Heart right ventricle (tissue), 16 donors: ENCODE measurements at regions of chr2 and their contacts with region 1.

Region 1: DNA sequence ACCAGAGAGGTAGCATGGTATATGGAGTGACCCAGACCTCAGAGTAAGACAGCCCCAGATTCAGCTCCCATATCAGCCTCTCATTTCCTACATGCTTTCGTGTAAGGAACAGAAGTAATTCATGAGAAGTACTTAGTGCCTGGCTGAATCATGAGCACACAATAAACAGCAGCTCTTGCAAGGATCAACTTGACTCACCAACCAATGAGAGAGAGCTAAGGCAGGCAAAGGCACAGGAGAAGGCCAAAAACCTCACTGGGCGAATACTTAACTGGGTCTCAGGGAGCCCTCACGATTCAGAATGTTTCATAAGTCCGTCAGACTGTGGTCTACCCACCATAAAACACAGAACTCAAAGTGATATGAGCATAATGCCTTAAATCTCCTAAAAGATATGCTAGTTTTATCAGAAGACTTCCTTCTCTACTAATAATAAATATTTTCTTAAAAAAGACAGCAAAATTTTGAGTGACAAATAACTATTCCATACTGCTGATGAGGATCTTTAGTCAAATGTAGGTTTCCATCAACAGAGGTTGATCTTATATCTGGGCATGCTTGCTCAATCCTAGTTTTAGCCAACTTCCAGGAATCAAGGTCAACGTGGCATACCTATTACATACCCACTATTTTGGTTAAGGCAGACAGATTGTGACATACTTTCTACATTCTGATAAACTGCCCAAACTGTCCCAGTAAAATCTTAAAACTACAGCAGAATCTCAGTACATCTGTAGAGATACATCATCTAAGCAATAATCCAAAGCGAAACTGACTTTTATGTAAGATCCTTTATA is 34.9 kb downstream of the IMMT start:
- DNase-seq: no peak
- ATAC-seq: no peak
- H3K4me3 ChIP-seq: no peak overlapping the region
- H3K27ac ChIP-seq: no peak overlapping the region
- H3K4me1 ChIP-seq: no peaks in the 10 kb centered on the region
- H3K27me3 ChIP-seq: no peaks in the 10 kb centered on the region
- CTCF ChIP-seq: no peak

Region 2: GRCh38 chr2:85396531-85397470 is 763.6 kb before region 1 on chr2:
- intact Hi-C with region 1: loop called in 1 of 10 experiments (anchors 5 kb)
- DNase-seq: no peak
- ATAC-seq: peak in 3 of 8 donors; percentile 18 to 25 (median 23)
- H3K4me3 ChIP-seq: no peak overlapping the region
- H3K27ac ChIP-seq: peak overlapping the region in 1 of 10 donors; percentile 5
- H3K4me1 ChIP-seq: peaks cover 0 to 6% (median 0%) of the 10 kb centered on the region in 9 donors
- H3K27me3 ChIP-seq: no peaks in the 10 kb centered on the region
- CTCF ChIP-seq: no peak

Region 3: DNA sequence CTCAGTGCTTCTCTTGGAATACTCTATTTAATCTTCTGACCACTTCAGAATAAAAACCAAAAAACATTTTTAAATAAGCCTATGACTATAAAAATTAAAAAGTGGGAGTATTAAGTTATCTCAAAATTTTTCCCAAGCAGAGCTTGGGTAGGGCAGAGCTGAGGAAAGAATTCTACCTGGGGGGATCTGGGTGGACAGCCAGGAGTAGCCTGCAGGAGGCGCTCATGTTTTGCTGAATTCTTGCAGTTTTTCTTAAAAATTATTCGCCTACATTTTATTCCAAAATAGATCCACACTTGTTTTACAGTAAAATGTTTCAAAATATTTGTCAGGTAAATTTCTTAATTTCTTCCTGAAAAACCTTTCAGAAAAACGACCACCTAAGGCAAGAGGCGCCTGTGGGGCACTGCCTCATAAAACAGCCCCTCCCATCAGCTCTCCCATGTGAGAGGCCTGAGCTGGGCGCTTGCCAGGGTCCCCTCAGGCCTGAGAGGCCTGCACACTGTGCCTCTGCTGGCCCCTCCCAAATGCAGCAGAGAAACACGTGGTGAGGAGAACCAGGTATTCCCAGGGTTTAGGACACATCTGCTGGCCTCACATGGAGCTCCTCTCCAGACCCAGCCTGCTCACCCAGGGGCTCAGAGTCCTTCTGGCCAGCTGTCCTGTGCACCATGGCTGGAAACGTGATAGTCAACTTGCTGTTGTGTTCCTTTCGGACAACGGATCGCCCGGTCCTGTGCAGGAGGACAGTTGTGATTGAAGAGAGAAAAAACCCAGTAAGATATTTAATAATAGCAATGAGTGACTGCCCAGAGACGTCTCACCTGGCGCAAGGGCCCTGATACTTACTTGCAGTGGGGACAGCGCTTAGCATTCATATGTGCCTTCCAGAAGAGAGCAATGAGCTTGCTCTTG is 72.2 kb before region 1 on chr2:
- intact Hi-C with region 1: no loop called
- DNase-seq: no peak
- ATAC-seq: no peak
- H3K4me3 ChIP-seq: no peak overlapping the region
- H3K27ac ChIP-seq: no peak overlapping the region
- H3K4me1 ChIP-seq: no peaks in the 10 kb centered on the region
- H3K27me3 ChIP-seq: no peaks in the 10 kb centered on the region
- CTCF ChIP-seq: peak in 5 of 9 donors; percentile 14 to 35 (median 23)

Region 4: DNA sequence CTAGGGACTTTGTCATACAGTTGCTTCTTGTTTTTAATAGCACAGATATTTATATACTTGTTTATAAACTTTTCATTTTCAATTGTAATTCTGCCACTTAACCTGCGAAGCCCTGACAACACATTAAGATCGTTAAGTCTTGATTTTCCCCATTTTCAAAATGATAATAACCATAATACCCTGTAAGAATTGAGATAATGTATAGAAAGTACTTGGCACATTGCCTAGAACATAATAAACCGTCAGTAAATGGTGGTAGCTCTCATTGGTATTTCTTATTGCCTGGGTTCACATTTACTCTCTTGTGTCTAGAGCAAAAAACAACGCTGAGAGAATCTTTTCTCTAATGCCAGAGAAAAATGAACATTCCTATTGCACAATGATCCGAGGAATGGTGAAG is 35.7 kb before region 1 on chr2:
- intact Hi-C with region 1: loop called in 1 of 10 experiments (anchors 5 kb)
- DNase-seq: no peak
- ATAC-seq: no peak
- H3K4me3 ChIP-seq: no peak overlapping the region
- H3K27ac ChIP-seq: no peak overlapping the region
- H3K4me1 ChIP-seq: no peaks in the 10 kb centered on the region
- H3K27me3 ChIP-seq: no peaks in the 10 kb centered on the region
- CTCF ChIP-seq: no peak

Region 5: DNA sequence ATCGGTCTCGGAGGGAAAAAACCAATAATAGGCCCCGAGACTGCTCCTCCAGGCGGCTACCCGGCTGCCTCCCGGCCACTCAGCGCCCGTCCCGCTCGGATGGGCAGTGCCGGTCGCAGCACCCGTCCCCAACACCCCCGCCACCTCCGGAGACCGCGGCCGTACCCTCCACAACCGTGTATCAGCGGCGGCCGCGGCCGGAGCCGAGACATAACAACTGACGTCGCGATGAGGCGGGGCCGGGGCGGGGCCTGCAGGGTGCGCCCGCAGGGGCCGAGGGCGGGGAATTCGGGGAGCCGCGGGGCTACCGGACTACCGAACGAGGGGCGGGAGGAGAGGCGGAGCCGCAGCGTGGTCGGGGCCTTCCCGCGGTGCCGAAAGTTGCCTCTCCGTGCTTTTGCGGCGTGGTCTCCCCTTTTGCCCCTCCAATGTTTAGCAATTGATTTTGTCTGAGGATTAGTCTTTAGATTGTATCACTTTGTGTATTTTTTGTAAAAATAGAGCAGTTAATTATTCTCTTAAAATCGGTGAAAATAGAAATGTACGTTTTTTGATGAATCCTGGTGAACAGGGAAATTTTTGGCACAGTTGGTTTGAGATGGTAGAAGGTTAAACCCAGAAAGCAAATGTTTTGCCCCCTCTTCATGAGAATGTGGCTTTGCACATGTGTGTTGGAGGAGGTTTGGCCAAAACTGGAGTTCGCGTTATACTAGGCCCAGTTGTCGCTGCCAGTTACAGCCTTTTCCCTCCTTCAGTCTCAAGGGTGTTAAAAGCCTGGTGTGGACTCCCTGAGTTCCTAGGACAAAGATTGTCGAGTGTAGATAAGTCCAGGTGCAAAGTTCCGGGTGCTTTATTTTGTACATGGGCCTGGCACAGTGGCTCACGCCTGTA is 463.5 kb after region 1 on chr2 and contains the start of gene RNF103:
- intact Hi-C with region 1: no loop called
- DNase-seq: peak; percentile 96 to 98
- ATAC-seq: peak; percentile 95 to 98 (median 97)
- H3K4me3 ChIP-seq: peak within 1 kb of the TSS; percentile 59 to 94 (median 86)
- H3K27ac ChIP-seq: peak within 1 kb of the TSS; percentile 97 to 99 (median 98)
- H3K4me1 ChIP-seq: peaks cover 0 to 36% (median 29%) of the 10 kb centered on the region in 9 donors
- H3K27me3 ChIP-seq: no peaks in the 10 kb centered on the region
- CTCF ChIP-seq: no peak
- total RNA-seq, gene RNF103: 33.2 to 83.0 (median 59.1) TPM